ENCODE measurements at regions of chr18 and their contacts with region 1.

Region 1: DNA sequence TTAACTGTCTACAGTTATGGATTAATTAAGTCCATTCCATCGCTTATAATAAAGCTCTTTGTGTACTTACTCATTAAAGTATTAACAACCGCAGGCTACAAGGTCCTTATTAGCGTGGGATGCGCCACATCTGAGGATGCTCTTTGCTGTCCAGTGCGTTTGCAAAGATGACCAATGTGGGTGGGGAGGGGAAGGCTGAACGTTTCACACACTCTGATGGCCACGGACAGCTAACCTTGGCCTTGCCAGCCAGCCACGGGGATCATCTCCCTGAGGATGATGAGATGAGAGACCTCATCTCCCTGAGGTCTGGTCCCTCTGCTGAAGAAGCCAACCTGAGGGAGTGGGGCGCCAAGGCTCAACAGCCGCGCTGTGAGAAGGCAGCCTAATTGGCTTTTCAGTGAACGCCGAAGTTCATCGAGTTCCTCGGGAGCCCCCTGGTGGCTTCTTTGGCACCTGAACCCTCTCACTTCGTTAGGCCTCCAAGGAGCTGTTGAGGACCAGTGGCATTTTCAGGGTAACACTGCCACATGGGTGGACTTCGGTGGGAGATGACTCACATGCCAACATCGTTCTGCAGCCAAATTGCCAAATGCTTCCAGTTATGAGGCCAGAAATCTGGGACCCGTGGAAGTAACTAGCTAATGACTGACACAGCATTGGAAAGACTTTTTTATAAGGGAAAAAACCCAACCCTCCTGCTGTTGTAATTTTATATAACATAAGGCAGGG is 69.3 kb upstream of the SEC11C start:
- DNase-seq: peak; percentile 63
- H3K4me3 ChIP-seq: no peak overlapping the region
- CTCF ChIP-seq: peak; percentile 87

Region 2: DNA sequence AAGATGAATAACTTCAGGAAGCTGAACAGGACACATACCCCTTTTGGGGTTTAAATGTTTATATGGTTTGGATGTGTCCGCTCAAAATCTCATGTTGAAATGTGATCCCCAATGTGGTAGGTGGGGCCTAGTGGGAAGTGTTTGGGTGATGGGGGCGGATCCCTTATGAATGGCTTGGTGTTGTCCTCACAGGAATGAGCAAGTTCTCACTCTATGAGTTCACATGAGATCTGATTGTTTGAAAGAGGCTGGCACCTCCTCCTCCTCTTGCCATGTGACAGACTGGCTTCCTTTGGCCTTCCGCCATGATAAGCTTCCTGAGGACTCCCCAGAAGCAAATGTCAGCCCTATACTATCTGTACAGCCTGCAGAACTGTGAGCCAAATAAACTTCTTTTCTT is 294.3 kb before region 1 on chr18:
- in situ Hi-C with region 1: loop called (anchors 5 kb)
- DNase-seq: no peak
- H3K4me3 ChIP-seq: no peak overlapping the region
- CTCF ChIP-seq: no peak